ENCODE measurements at regions of chrX and their contacts with region 1.

Region 1: GRCh38 chrX:11558972-11559371 is 106.7 kb downstream of the ARHGAP6 start:
- DNase-seq: peak; percentile 40
- ATAC-seq: no peak
- H3K4me3 ChIP-seq: no peak overlapping the region
- H3K27ac ChIP-seq: no peak overlapping the region
- H3K4me1 ChIP-seq: peaks cover 25% of the 10 kb centered on the region
- H3K27me3 ChIP-seq: no peaks in the 10 kb centered on the region
- CTCF ChIP-seq: peak; percentile 59

Region 2: DNA sequence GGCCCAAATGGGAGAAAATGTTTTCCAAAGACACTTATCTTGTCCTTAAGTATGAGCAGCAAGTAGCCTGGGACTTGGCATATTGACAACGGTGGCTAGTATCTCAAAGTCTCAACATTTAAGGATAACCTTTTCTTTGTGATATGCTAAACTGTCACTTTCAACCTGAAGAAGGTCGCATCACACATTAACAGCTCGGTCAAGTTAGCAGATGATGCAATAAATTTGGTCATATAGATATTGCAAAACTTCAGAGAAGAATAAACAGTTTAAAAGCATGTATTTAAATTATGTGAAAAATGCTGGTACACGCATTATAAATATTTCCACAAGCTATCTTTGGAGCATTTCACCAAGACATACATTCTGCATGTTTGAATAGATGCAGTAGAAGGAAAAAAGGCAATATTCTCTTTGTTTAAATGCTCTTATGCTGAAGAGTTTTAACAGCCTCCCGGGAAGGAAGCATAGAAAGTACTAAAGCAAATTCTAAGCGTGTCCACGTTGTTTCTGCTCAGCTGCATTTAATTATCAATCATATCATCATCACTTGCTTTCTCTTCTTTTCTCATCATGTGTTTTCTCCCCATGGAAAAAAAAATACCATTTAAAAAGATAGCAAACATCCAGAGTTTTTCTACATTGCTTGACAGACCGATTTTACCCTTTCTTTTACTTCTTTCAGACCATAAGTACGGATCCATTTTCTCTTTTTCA is 82.5 kb after region 1 on chrX:
- CTCF ChIA-PET with region 1: no interaction called
- POLR2A ChIA-PET with region 1: no interaction called
- intact Hi-C with region 1: loop called (anchors 10 kb)
- DNase-seq: no peak
- ATAC-seq: no peak
- H3K4me3 ChIP-seq: no peak overlapping the region
- H3K27ac ChIP-seq: no peak overlapping the region
- H3K4me1 ChIP-seq: no peaks in the 10 kb centered on the region
- H3K27me3 ChIP-seq: peaks cover 36% of the 10 kb centered on the region
- CTCF ChIP-seq: no peak

Region 3: DNA sequence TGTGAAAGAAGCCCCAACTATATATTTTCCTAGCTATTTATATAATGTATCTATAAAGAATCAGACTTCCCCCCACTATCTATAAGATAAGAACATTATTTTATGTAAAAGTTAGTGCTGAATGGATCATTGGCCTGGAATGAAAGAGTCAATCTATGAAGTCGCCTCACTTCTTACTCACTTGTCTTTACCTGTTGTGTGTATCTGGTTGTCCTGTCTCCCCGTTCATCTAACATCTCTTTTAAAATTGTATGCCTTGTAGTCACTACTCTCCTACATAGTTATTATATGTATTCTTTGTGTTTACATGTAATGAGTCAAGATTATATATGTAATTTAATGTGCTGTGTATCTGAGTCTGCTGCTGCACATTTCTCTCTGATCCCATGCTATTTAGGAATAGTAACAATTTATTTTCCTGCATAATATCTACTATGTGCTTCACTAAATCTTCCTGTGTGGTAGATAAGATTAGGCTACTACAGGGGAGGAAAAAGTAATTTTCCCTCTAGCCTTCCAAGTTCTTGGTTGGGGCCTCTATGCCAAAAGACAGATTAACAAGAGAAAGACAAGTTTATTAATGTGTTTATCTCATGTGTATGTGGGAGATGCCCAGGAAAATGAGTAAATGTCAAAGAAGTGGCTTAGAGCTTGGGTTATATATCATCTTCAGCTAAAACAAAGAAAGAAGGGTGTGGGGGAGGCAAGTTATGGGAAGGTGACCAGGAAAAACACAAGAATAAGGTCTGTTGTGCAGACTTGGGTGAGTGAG is 501.7 kb after region 1 on chrX:
- CTCF ChIA-PET with region 1: no interaction called
- POLR2A ChIA-PET with region 1: interaction called, 21 read pairs
- intact Hi-C with region 1: no loop called
- DNase-seq: peak; percentile 25
- ATAC-seq: peak; percentile 46; the same call in 1 of the 2 replicates
- H3K4me3 ChIP-seq: no peak overlapping the region
- H3K27ac ChIP-seq: no peak overlapping the region
- H3K4me1 ChIP-seq: peaks cover 15% of the 10 kb centered on the region; the same call in 1 of the 2 replicates
- H3K27me3 ChIP-seq: no peaks in the 10 kb centered on the region
- CTCF ChIP-seq: no peak